ENCODE measurements at regions of chr1 and their contacts with region 1.

Region 1: DNA sequence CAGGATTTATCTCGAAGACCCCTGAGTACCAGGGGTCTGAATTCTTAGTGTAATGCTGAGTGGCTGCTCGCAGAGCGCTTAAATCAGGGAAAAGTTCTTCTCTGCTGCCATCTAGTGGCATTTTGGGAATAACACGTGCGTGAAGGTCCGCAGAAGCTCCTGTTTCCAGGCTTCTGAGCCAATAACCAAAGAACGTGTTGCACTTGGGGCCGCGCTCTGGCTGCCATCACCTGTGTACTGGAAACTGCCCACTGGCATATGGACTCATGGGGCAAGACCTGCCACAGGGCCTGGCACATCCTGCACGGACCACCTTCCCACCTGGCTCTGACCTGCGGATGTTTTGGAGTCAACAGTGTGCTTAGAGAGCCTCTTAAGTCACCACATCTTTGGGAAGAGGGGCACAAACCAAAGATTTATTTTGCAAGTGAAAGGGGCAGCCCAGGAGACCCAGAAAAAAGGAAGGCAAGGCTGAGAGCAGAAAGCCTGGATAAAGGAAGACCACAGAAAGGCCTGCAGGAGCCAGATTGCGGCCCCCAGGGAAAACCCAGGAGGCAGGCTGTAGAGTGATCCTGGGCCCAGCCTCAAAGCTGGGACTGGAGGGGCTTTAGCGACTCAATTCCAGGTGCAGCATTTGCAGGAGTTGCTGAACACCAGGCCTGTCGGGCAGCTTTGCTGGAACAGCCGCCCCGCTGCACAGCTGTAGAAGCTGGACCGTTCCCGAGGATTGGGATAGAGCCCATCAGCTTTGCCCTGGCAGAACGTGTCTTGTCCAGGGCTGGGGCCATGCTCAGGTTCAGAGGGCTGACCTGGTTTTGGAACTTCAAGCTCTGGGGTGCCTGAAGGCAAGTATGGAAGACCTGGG is 13.0 kb downstream of the CHIT1 start:
- DNase-seq: peak; percentile 81
- CTCF ChIP-seq: peak; percentile 69

Region 2: DNA sequence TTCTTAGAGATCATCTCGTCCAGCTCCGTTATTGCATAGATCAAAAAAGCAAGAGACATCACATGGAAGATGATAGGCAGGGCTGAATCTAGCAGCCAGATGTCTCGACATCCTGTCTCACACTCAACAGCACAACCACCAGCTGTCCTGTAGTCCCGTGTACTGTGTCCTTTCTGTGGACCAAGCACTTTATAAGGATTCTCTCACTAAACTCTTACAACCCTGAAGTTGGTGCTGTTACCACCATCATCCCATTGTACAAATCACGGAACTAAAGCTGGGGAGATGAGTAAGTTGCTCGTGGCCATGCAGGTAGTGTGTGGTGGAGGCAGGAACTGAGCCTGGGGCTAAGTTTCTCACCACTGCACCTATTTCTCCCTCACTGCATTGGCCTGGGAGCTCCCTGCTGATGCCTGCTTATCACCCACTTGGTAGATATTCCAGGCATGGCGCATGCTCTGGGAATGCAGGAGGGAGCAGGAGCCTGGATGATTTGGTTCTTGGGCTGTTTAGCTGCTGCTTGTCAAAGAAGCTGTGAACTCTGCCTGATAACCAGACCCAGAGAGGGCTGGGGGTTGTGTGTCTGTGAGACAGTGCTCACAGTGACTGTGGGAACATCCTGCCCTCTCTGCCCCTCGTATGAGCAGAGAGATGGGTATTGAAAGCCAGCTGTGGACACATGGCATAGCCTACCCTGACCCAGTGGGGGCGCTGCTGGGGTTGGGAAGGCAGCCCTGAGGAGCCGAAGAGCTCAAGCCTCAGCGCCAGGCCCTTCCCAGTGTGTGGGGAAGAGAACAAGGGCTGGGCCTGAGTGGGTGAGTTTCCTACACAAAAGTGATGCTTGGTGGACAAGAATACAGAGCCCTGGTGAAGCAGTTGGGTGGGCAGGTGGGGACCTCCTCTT is 176.6 kb before region 1 on chr1:
- in situ Hi-C with region 1: loop called (anchors 5 kb)
- DNase-seq: no peak
- CTCF ChIP-seq: no peak

Region 3: GRCh38 chr1:203408486-203409427 is 192.3 kb after region 1 on chr1:
- in situ Hi-C with region 1: no loop called
- DNase-seq: no peak
- CTCF ChIP-seq: no peak

Region 4: GRCh38 chr1:203754455-203754864 is 538.0 kb after region 1 on chr1:
- in situ Hi-C with region 1: no loop called
- DNase-seq: no peak
- CTCF ChIP-seq: no peak